A549 (cell line): ENCODE measurements at regions of chr6 and their contacts with region 1.

Region 1: DNA sequence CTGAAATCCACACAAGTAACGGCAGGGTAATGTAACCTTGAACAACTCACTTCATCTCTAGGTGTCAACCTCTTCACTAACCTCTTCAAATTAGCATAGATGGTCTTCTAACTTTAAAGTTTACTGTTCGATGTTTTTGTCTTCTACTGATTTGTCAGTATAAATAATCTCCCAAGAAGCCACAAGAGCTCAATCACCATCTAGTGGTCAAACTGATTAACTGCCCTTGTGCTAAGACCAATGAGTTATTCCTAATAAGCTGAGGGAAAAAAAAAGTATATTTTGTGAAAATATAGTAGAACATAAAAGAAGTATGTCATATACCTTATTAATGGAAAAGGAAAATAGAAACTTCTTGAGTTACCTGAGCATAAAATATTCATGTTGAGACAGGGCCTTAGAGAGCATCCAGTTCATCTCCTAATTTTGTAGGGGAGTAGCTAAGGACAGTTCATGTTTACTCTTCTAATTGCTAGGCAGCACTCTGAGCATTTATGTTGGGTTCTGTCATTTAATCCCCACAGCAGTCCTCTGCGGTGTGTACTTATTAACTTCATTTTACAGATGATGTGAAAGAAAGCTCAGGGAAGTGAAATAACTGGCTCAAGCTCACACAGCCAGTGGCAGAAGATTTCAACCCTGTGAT is 317.1 kb downstream of the ESR1 start:
- DNase-seq: peak; percentile 33 to 56
- ATAC-seq: peak in 1 of 2 experiments; percentile 77; a peak in 3 of 6 replicates
- H3K4me3 ChIP-seq: no peak overlapping the region
- H3K27ac ChIP-seq: no peak overlapping the region
- H3K4me1 ChIP-seq: no peaks in the 10 kb centered on the region
- CTCF ChIP-seq: peak; percentile 65
- EP300 ChIP-seq: no peak
- POLR2A ChIP-seq: no peak
- RAD21 ChIP-seq: peak; percentile 77 to 78

Region 2: GRCh38 chr6:151765444-151765886 is 359.1 kb before region 1 on chr6:
- CTCF ChIA-PET with region 1: interaction called, 24 read pairs
- POLR2A ChIA-PET with region 1: no interaction called
- DNase-seq: peak; percentile 56 to 60
- ATAC-seq: peak in 1 of 2 experiments; percentile 68; a peak in 3 of 6 replicates
- H3K4me3 ChIP-seq: no peak overlapping the region
- H3K27ac ChIP-seq: peak overlapping the region; percentile 30 to 49; a peak in 1 of 6 replicates
- H3K4me1 ChIP-seq: no peaks in the 10 kb centered on the region
- CTCF ChIP-seq: peak; percentile 63
- EP300 ChIP-seq: no peak
- POLR2A ChIP-seq: no peak
- RAD21 ChIP-seq: peak; percentile 67 to 69